ENCODE measurements at regions of chr22 and their contacts with region 1.

Region 1: GRCh38 chr22:39306581-39307361 is 12.7 kb downstream of the RPL3 start:
- DNase-seq: no peak
- H3K4me3 ChIP-seq: no peak overlapping the region
- H3K27ac ChIP-seq: no peak overlapping the region
- H3K4me1 ChIP-seq: no peaks in the 10 kb centered on the region
- H3K27me3 ChIP-seq: no peaks in the 10 kb centered on the region
- CTCF ChIP-seq: peak; percentile 20

Region 2: DNA sequence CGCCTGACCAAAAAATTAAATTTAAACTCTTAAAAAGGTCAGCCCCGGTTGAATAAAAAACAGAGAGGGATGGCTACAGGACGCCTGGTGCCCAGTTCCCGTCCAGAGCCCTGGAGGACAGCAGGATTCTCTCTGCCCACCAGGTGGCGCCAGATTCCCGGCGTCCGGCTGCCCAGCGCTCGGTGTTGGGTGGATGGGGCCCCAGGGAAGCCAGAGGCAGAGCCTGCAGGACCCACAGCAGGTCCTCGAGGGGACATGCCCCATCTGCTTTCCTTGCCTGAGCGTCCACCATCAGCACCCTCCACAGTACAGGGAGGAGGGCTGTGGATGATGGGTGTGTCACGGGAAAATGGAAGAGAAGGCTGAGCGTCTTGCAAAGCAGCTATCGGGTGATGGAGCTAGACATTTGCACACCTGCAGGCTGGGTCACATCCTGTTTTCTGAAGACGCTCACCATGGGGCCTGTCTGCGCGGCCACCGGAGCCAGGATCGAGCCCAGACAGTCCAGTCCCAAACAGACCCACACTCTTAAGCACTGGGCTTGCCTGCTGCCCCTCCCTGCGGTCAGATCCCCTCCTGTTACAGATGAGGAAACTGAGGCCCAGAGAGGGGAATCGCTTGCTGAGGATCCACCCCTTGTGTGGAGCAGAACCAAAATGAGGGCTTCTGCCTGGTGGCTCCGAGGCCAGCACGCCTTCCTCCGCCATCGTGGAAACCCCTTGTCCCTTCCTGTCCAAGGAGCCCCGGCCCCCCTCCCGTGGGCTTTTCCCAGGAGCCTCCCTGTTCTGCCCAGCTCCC is 135.7 kb before region 1 on chr22:
- intact Hi-C with region 1: loop called (anchors 2 kb)
- DNase-seq: peak; percentile 82
- H3K4me3 ChIP-seq: no peak overlapping the region
- H3K27ac ChIP-seq: no peak overlapping the region
- H3K4me1 ChIP-seq: peaks cover 6% of the 10 kb centered on the region
- H3K27me3 ChIP-seq: no peaks in the 10 kb centered on the region
- CTCF ChIP-seq: peak; percentile 94

Region 3: GRCh38 chr22:39230261-39231196 is 76.2 kb before region 1 on chr22:
- intact Hi-C with region 1: no loop called
- DNase-seq: no peak
- H3K4me3 ChIP-seq: no peak overlapping the region
- H3K27ac ChIP-seq: no peak overlapping the region
- H3K4me1 ChIP-seq: peaks cover under 1% of the 10 kb centered on the region
- H3K27me3 ChIP-seq: peaks cover 1% of the 10 kb centered on the region
- CTCF ChIP-seq: no peak

Region 4: GRCh38 chr22:39240828-39241793 is 65.7 kb before region 1 on chr22:
- intact Hi-C with region 1: loop called (anchors 10 kb)
- DNase-seq: peak; percentile 81
- H3K4me3 ChIP-seq: peak overlapping the region; percentile 32
- H3K27ac ChIP-seq: no peak overlapping the region
- H3K4me1 ChIP-seq: peaks cover 26% of the 10 kb centered on the region
- H3K27me3 ChIP-seq: peaks cover 61% of the 10 kb centered on the region
- CTCF ChIP-seq: no peak

Region 5: GRCh38 chr22:39845529-39845928 is 538.8 kb after region 1 on chr22:
- intact Hi-C with region 1: no loop called
- DNase-seq: no peak
- H3K4me3 ChIP-seq: no peak overlapping the region
- H3K27ac ChIP-seq: no peak overlapping the region
- H3K4me1 ChIP-seq: no peaks in the 10 kb centered on the region
- H3K27me3 ChIP-seq: no peaks in the 10 kb centered on the region
- CTCF ChIP-seq: no peak